Transverse colon (tissue), 4 donors: ENCODE measurements at regions of chr1 and their contacts with region 1.

Region 1: GRCh38 chr1:56958526-56958925 is 7.3 kb downstream of the C8B start:
- DNase-seq: no peak
- H3K4me3 ChIP-seq: no peak overlapping the region
- H3K27ac ChIP-seq: no peak overlapping the region
- H3K4me1 ChIP-seq: no peaks in the 10 kb centered on the region
- H3K27me3 ChIP-seq: no peaks in the 10 kb centered on the region
- CTCF ChIP-seq: no peak
- EP300 ChIP-seq: no peak
- POLR2A ChIP-seq: no peak

Region 2: DNA sequence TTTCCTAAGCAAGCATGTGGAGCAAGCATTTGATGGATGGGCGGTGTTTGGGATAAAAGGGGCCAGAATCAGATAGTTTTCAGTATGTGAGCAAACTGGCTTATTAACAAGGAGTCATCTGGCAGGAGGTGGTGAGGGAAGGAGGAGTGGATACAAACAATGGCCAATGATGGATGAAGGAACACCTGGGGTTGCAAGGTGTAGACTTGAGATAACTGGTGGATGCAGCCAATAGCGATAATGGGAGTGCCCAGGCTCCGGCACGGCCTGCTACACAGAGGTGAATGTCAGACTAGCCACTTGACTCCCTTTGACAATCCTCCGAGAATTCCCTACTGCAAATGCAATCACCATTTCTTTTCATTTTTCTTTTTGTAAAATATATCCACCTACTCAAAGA is 34.4 kb before region 1 on chr1:
- in situ Hi-C with region 1: no loop called
- intact Hi-C with region 1: loop called (anchors 1 kb)
- DNase-seq: no peak
- H3K4me3 ChIP-seq: no peak overlapping the region
- H3K27ac ChIP-seq: no peak overlapping the region
- H3K4me1 ChIP-seq: no peaks in the 10 kb centered on the region
- H3K27me3 ChIP-seq: no peaks in the 10 kb centered on the region
- CTCF ChIP-seq: no peak
- EP300 ChIP-seq: no peak
- POLR2A ChIP-seq: no peak